CD8-positive, alpha-beta T cell (primary cell): ENCODE measurements at regions of chr3 and their contacts with region 1.

Region 1: DNA sequence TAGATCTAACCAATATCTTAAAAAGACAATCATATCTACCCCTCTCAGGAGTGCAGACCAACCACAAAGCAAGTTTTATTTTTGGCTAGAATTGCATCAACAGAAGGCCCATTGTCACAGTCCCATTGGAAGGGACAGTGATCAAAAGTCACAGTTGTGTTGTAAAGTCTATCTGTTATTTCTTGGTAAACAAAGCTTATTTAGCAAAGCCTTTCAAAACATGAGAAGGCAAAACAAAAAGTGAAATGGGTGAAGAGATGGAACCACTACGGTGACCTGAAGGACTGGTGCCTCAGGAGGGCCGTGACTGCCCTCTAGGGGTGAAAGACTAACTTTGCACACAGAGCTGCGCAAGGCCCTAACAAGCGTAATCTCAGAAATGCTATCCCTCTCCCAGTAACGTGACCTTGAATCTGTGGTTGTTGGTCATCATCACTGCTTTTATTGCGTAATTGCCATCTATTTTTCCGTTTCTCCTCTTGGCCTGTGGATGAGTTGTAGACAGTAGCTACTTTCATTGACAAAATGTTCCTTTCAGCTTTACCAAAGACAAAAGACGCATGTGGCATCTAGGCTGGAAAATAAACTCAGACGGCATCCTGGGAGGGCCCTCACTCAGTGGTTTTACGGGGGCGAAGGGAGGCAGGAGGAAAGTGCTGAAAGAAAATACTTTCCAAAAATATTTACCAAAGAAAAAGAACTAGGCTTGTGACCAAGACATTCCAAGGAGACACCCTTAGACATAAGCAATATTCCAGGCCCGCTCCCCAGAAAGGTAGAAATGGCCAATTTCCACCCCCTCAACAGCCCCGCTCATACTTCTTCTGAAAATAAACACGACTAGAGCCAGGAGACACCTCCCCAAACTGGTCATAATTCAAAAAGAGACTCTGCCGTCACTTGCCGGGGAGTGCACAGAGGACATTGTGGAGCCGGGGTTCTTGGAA is 79.4 kb downstream of the FRMD4B start:
- DNase-seq: peak in 8 of 9 experiments; percentile 50 to 84 (median 60)
- ATAC-seq: peak; percentile 99
- H3K4me3 ChIP-seq: no peak overlapping the region
- H3K4me3 Mint-ChIP-seq: no peak overlapping the region
- H3K27ac ChIP-seq: no peak overlapping the region
- H3K27ac Mint-ChIP-seq: no peak overlapping the region
- H3K4me1 ChIP-seq: no peaks in the 10 kb centered on the region
- H3K4me1 Mint-ChIP-seq: peaks cover 6% of the 10 kb centered on the region
- H3K27me3 ChIP-seq: no peaks in the 10 kb centered on the region
- H3K27me3 Mint-ChIP-seq: no peaks in the 10 kb centered on the region
- CTCF ChIP-seq: peak; percentile 82

Region 2: DNA sequence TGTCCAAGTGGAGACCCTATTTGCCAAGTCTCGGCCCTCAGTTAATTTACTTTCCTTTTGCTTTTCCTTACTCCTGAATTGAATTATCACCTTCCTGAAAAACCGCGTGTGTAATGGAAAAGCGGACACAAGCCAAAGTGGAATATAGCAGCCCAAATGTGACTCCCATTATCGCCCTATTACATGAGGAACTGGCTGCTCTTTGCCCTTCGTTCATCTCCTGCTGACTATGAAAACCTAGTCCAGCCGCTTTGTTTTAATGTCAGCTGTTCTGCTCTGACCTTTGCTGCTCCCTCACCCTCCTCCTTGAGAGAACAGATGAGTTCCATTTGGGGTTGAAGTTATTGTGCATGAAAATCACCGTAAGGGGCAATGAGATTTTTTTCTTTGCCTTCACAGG is 1019.4 kb before region 1 on chr3:
- CTCF ChIA-PET with region 1: no interaction called
- POLR2A ChIA-PET with region 1: no interaction called
- intact Hi-C with region 1: no loop called
- DNase-seq: no peak
- ATAC-seq: no peak
- H3K4me3 ChIP-seq: no peak overlapping the region
- H3K4me3 Mint-ChIP-seq: no peak overlapping the region
- H3K27ac ChIP-seq: no peak overlapping the region
- H3K27ac Mint-ChIP-seq: no peak overlapping the region
- H3K4me1 ChIP-seq: no peaks in the 10 kb centered on the region
- H3K4me1 Mint-ChIP-seq: no peaks in the 10 kb centered on the region
- H3K27me3 ChIP-seq: no peaks in the 10 kb centered on the region
- H3K27me3 Mint-ChIP-seq: no peaks in the 10 kb centered on the region
- CTCF ChIP-seq: no peak

Region 3: DNA sequence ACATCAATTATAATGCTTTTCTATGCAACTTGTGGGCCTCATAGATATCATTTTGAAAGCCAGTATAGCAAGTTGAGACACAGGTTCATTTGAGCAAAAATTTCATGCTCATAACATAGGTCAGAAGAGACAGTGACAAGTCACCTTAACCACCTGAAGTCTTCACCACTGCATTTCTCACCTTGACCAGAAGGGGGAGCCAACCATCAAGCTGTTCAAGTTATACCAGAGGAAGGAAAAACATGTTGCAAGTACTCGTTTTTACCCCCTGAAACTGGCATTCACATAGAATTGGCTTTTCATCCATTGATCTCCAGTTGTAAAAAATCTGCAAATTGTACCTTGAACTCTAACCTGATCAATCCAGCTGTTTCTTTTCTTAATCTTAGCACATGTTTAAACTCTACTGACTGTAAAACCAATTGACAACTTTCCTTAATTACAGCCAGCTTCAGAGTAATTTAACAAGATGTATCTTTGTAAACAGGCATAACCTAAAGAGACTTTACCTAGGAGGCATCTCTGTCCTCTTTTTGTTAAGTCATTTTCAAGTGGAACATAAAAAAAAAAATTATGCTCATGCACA is 185.5 kb before region 1 on chr3:
- CTCF ChIA-PET with region 1: interaction called, 46 read pairs
- POLR2A ChIA-PET with region 1: interaction called, 3 read pairs
- intact Hi-C with region 1: loop called (anchors 1 kb)
- DNase-seq: peak; percentile 63 to 88 (median 82)
- ATAC-seq: peak; percentile 92
- H3K4me3 ChIP-seq: no peak overlapping the region
- H3K4me3 Mint-ChIP-seq: no peak overlapping the region
- H3K27ac ChIP-seq: no peak overlapping the region
- H3K27ac Mint-ChIP-seq: no peak overlapping the region
- H3K4me1 ChIP-seq: no peaks in the 10 kb centered on the region
- H3K4me1 Mint-ChIP-seq: peaks cover 5% of the 10 kb centered on the region
- H3K27me3 ChIP-seq: no peaks in the 10 kb centered on the region
- H3K27me3 Mint-ChIP-seq: no peaks in the 10 kb centered on the region
- CTCF ChIP-seq: peak; percentile 96

Region 4: DNA sequence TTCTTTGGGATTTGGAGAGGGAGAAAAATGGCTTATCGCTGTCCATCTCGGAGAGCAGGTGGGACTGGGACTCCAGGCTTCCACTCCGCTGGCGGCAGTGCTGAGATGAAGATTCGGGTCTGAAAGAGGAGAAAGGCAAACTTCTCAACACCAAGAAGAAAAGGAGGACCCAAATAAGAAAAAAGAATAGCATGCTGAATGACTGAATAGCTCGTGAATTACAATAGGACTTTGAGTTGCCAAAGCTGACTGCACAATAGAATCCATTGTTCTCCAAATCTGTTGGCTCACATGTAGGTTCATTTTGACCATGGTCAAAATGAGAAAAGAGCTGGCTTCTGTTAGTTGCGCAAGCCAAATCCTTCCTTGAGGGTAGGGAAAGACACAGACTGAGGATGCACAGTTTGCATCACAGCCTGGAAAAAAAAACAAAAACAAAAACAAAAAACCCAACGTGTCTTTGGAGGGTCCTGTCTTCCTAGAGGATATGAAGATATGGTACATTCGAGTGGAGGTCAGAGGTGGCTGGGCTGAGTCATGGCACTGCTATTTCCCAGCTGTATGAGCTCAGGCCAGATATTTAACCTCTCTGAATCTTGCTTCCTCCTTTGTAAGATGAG is 124.8 kb before region 1 on chr3:
- CTCF ChIA-PET with region 1: interaction called, 10 read pairs
- POLR2A ChIA-PET with region 1: no interaction called
- intact Hi-C with region 1: no loop called
- DNase-seq: no peak
- ATAC-seq: no peak
- H3K4me3 ChIP-seq: no peak overlapping the region
- H3K4me3 Mint-ChIP-seq: no peak overlapping the region
- H3K27ac ChIP-seq: no peak overlapping the region
- H3K27ac Mint-ChIP-seq: no peak overlapping the region
- H3K4me1 ChIP-seq: no peaks in the 10 kb centered on the region
- H3K4me1 Mint-ChIP-seq: peaks cover 5% of the 10 kb centered on the region
- H3K27me3 ChIP-seq: no peaks in the 10 kb centered on the region
- H3K27me3 Mint-ChIP-seq: peaks cover 2% of the 10 kb centered on the region
- CTCF ChIP-seq: no peak

Region 5: DNA sequence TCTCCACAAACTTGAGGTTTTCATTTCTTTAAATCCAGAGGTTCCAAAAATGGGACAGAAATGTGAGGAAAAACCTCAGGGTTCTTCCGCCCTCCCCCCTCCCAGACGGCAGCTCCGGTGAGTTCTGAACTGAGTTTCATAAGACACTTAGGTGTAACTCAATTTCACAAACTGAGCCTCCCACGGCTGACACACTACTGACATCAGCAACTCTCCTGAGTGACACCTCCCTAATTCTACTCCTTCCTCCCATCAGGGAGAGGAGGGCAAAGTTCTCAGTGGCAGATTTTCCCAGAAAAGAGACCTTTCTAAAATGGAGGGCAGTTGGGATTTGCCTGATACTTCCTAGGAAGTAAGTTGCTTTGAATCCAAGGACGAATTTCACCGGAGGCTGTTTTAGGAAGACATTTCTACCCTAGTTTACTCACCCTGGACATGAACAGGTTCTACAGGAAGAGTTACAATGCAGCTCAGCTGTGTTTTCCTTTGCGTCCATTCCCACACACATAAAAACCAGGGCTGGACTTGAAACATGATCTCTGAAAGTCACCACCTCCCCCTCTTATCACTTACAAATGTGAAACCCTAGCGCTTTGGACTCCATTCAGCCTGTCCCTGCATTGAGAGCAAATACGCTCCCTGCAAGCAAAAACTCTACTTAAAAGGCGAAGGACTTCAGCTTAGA is 106.0 kb before region 1 on chr3:
- CTCF ChIA-PET with region 1: interaction called, 10 read pairs
- POLR2A ChIA-PET with region 1: no interaction called
- intact Hi-C with region 1: no loop called
- DNase-seq: peak in 2 of 9 experiments; percentile 24
- ATAC-seq: no peak
- H3K4me3 ChIP-seq: no peak overlapping the region
- H3K4me3 Mint-ChIP-seq: peak overlapping the region; percentile 88
- H3K27ac ChIP-seq: no peak overlapping the region
- H3K27ac Mint-ChIP-seq: peak overlapping the region; percentile 5
- H3K4me1 ChIP-seq: peaks cover 25% of the 10 kb centered on the region
- H3K4me1 Mint-ChIP-seq: peaks cover 41% of the 10 kb centered on the region
- H3K27me3 ChIP-seq: no peaks in the 10 kb centered on the region
- H3K27me3 Mint-ChIP-seq: no peaks in the 10 kb centered on the region
- CTCF ChIP-seq: no peak

Region 6: DNA sequence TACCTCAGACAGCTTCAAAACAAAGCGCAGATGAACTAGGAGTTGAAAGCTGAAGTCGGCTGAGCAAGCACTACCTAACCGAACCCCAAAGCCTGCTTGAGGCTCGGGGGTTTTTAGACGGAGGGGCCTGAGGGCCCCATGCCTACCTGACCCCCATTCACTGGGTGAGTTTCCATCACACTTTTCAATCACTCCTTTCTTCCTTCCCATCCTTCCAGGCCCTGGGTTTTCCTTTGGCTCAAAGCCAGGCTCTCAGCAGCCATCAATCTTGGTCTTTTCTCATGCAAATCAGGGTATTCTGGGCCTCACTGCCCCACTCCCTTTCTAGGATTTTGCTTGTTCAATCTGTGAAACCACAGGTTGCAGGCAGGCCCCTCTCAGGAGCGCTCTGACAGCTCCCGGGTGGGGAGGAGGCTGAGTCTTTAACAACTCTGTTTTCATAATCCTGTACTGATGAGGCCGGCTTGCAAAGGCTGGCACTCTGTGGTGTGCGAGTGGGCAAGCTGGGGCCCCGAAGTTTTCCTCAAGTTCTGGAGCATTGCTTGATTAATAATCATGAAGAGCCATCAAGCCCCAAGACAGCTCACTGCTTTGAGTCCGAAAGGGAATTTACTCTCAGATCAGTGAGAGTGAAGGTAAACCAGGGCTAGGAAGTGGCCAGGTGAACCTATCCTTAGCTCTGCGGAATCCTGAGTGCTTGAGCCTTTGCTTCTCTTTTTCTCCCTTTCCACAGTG is 18.2 kb before region 1 on chr3:
- CTCF ChIA-PET with region 1: interaction called, 13 read pairs
- POLR2A ChIA-PET with region 1: no interaction called
- intact Hi-C with region 1: no loop called
- DNase-seq: peak in 3 of 9 experiments; percentile 16 to 50 (median 31)
- ATAC-seq: no peak
- H3K4me3 ChIP-seq: no peak overlapping the region
- H3K4me3 Mint-ChIP-seq: no peak overlapping the region
- H3K27ac ChIP-seq: no peak overlapping the region
- H3K27ac Mint-ChIP-seq: no peak overlapping the region
- H3K4me1 ChIP-seq: no peaks in the 10 kb centered on the region
- H3K4me1 Mint-ChIP-seq: peaks cover 9% of the 10 kb centered on the region
- H3K27me3 ChIP-seq: no peaks in the 10 kb centered on the region
- H3K27me3 Mint-ChIP-seq: no peaks in the 10 kb centered on the region
- CTCF ChIP-seq: no peak

Region 7: GRCh38 chr3:69294014-69294775 is 12.3 kb before region 1 on chr3:
- CTCF ChIA-PET with region 1: interaction called, 15 read pairs
- POLR2A ChIA-PET with region 1: no interaction called
- intact Hi-C with region 1: no loop called
- DNase-seq: no peak
- ATAC-seq: no peak
- H3K4me3 ChIP-seq: no peak overlapping the region
- H3K4me3 Mint-ChIP-seq: no peak overlapping the region
- H3K27ac ChIP-seq: no peak overlapping the region
- H3K27ac Mint-ChIP-seq: no peak overlapping the region
- H3K4me1 ChIP-seq: no peaks in the 10 kb centered on the region
- H3K4me1 Mint-ChIP-seq: no peaks in the 10 kb centered on the region
- H3K27me3 ChIP-seq: no peaks in the 10 kb centered on the region
- H3K27me3 Mint-ChIP-seq: no peaks in the 10 kb centered on the region
- CTCF ChIP-seq: no peak

Region 8: DNA sequence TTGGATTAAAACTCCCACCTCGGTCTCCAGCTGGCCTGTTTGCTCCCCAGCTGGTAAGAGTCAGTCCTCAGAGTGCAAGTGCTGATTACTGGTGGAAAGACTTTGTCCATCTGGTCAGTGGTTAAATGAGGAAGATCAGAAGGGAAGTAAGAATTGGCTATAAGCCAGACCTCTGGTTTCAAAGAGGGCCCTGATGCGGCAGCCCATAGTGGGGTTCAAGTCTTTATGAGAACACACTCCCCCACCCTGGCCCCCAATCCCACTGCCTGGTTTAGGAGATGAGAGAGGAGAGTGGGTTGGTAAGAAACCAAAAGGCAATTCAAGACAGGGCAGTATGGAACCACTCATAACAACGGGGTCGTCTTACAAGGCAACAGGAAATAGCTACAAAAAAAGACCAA is 14.4 kb after region 1 on chr3:
- CTCF ChIA-PET with region 1: interaction called, 15 read pairs
- POLR2A ChIA-PET with region 1: no interaction called
- intact Hi-C with region 1: no loop called
- DNase-seq: peak in 1 of 9 experiments; percentile 9
- ATAC-seq: no peak
- H3K4me3 ChIP-seq: no peak overlapping the region
- H3K4me3 Mint-ChIP-seq: no peak overlapping the region
- H3K27ac ChIP-seq: no peak overlapping the region
- H3K27ac Mint-ChIP-seq: no peak overlapping the region
- H3K4me1 ChIP-seq: no peaks in the 10 kb centered on the region
- H3K4me1 Mint-ChIP-seq: no peaks in the 10 kb centered on the region
- H3K27me3 ChIP-seq: no peaks in the 10 kb centered on the region
- H3K27me3 Mint-ChIP-seq: no peaks in the 10 kb centered on the region
- CTCF ChIP-seq: no peak

Region 9: GRCh38 chr3:69510481-69511030 is 204.0 kb after region 1 on chr3:
- CTCF ChIA-PET with region 1: no interaction called
- POLR2A ChIA-PET with region 1: no interaction called
- intact Hi-C with region 1: no loop called
- DNase-seq: no peak
- ATAC-seq: no peak
- H3K4me3 ChIP-seq: no peak overlapping the region
- H3K4me3 Mint-ChIP-seq: no peak overlapping the region
- H3K27ac ChIP-seq: no peak overlapping the region
- H3K27ac Mint-ChIP-seq: no peak overlapping the region
- H3K4me1 ChIP-seq: no peaks in the 10 kb centered on the region
- H3K4me1 Mint-ChIP-seq: no peaks in the 10 kb centered on the region
- H3K27me3 ChIP-seq: no peaks in the 10 kb centered on the region
- H3K27me3 Mint-ChIP-seq: peaks cover 4% of the 10 kb centered on the region
- CTCF ChIP-seq: no peak

Region 10: GRCh38 chr3:69558912-69559311 is 252.4 kb after region 1 on chr3:
- CTCF ChIA-PET with region 1: no interaction called
- POLR2A ChIA-PET with region 1: no interaction called
- intact Hi-C with region 1: no loop called
- DNase-seq: no peak
- ATAC-seq: no peak
- H3K4me3 ChIP-seq: no peak overlapping the region
- H3K4me3 Mint-ChIP-seq: no peak overlapping the region
- H3K27ac ChIP-seq: no peak overlapping the region
- H3K27ac Mint-ChIP-seq: no peak overlapping the region
- H3K4me1 ChIP-seq: no peaks in the 10 kb centered on the region
- H3K4me1 Mint-ChIP-seq: no peaks in the 10 kb centered on the region
- H3K27me3 ChIP-seq: no peaks in the 10 kb centered on the region
- H3K27me3 Mint-ChIP-seq: no peaks in the 10 kb centered on the region
- CTCF ChIP-seq: no peak